Right ventricle myocardium inferior (tissue), 1 donor: ENCODE measurements at regions of chr20 and their contacts with region 1.

Region 1: DNA sequence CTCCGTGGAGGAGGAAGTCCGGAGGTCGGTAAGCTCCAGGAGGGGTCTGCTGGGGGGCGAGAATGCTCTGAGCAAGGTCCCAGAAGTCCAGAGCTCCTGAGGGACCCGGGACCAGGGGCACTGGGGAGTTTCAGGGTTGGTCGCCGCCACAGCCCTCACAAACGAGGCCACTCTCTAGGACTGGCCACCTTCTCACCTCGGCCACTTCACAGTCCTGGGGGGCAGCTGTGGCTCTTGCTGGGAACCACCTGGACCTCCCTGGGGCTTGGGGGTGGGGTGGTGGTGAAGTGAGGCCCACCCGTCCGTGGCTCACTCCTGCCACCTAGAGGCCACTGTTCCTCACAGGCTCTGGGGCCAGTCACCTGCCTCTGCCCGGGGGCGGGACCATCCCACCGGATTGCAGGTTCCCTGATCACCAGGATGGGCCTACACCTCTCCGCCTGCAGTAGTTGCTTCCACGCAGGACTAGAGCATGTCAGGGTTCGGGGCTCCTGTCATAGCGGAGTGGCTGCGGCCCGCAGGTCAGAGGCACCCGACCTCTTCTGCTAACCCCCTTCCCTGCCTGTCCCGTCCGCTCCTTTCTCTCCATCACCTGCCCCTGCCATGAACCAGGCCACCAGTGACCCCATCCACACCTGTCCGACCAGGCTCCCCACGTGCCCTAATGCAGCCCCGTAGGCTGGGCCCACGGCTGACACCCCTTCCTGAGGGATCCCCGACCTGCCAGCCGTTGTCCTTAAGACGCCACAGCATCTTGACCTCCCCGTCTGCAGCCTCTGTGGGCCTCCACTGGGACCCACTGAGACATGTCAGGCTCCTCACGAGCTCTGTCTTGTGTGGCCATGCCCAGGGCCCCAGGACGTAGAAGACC is 5.1 kb upstream of the TCEA2 start:
- DNase-seq: peak; percentile 90
- ATAC-seq: peak; percentile 56

Region 2: DNA sequence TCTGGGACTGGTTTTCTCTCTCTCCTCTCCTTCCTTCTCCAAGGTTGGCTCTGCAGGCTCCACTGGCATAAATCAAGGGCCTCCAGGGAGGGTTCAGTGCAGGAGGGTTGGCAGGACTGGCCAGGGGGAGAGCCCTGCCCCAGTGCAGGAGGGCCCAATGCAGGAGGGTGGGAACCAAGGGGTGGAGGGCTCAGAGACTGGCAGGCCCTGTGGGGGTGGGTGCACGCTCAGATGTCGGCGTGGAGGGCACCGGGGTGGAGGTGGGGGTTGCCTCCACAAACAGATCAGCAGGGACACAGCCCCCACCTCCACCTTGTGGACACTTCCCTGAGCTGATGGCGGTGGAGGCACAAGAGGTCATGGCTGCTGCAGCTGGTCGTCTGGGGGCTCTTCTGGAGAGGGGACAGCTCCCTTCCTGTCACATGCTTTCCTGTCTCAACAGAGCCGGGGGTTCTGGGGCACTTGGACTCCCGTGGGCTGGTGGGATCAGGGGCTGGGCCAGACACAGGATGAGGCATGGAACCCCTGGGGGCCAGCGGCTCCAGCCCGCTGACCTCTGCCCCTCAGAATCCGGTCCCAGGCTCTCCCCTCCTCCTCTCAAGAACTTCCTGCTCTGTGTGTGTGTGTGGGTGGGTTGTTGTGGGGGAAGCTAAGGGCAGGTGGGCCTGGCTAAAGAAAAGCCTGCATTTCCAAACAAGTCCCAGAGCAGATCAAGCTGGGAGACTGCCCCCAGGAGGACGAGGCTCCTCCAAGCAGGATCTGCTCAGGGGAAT is 199.3 kb before region 1 on chr20:
- intact Hi-C with region 1: loop called (anchors 10 kb)
- DNase-seq: no peak
- ATAC-seq: peak; percentile 30

Region 3: GRCh38 chr20:63955827-63956663 is 101.8 kb before region 1 on chr20 and contains the start of gene UCKL1:
- intact Hi-C with region 1: no loop called
- DNase-seq: peak; percentile 97
- ATAC-seq: peak; percentile 87
- total RNA-seq, gene UCKL1: 52.0 TPM

Region 4: DNA sequence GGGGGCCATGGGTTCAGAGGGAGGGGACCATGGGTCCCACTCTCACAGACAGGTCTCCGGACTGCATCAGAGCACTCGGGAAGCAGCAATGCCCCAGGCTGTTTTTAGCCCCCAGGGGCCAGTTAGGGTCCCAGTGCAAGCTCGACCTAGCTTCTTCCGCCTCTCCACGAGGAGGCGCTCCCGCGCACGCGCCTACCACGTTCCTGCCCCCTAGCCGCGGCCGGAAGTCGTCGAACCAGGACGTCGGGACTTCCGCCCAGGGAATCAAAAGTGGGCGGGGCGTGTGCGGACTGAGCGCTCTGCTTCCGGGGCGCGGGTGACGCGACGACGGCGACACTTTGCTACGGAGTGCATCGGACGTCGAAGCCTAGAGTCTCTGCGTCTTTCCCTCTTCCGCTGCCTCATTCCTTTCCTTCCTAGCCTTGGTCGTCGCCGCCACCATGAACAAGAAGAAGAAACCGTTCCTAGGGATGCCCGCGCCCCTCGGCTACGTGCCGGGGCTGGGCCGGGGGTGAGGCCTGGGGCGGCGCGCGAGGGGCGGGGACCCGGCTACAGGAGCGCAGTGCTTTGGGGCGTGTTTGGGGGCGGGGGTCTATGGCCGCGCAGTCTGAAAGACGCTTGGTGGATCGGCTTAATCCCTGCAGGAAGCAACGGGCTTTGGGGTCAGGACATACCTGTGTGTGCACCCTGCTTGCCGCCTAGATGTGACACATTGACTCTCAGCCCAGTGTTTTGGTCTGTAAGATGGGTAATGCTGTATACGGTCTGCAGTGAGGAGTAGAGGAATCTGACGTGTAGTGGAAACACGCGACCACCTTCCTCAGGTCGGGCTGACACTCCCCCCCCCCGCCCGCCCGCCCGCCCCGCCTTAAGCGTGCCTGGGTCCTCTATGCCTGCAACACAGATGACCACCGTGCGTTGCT is 76.8 kb before region 1 on chr20 and contains the start of gene PRPF6:
- intact Hi-C with region 1: loop called (anchors 2 kb)
- DNase-seq: peak; percentile 97
- ATAC-seq: peak; percentile 92
- total RNA-seq, gene PRPF6: 46.4 TPM

Region 5: DNA sequence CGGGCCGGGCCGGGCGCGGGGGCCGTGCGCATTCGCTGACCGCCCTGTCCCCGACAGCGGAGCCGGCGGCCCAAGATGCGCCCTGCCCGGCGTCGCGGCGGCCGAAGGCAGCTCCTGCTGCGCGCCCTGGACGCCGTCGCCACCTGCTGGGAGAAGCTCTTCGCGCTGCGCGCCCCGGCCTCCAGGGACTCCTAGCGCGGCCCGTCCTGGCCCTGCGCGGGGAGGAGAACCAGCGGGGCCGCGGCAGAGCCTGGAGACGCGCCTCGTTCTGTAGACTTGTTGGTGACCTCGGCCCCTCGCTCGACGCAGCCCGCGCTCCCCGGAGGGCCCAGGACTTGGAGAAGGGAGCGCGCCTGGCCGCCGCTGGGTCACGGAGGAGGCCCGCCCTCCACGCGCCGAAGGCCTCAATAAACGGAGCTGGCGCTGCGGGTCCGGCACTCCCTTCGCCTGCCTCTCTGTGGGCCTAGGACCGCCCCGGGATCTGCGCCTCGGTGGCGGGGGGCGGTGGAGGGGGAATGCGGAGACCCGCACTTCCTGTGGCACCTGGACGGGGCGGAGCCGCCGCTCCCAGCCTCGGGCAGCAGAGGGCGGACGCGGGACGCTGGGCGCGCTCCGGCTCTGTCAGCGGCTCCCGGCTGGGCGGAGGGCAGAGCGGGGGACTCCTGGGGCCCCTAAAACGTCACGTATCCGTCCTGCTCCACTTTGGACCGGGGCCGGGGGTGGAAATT is 19.1 kb before region 1 on chr20:
- intact Hi-C with region 1: loop called (anchors 1 kb)
- DNase-seq: peak; percentile 89
- ATAC-seq: peak; percentile 80

Region 6: DNA sequence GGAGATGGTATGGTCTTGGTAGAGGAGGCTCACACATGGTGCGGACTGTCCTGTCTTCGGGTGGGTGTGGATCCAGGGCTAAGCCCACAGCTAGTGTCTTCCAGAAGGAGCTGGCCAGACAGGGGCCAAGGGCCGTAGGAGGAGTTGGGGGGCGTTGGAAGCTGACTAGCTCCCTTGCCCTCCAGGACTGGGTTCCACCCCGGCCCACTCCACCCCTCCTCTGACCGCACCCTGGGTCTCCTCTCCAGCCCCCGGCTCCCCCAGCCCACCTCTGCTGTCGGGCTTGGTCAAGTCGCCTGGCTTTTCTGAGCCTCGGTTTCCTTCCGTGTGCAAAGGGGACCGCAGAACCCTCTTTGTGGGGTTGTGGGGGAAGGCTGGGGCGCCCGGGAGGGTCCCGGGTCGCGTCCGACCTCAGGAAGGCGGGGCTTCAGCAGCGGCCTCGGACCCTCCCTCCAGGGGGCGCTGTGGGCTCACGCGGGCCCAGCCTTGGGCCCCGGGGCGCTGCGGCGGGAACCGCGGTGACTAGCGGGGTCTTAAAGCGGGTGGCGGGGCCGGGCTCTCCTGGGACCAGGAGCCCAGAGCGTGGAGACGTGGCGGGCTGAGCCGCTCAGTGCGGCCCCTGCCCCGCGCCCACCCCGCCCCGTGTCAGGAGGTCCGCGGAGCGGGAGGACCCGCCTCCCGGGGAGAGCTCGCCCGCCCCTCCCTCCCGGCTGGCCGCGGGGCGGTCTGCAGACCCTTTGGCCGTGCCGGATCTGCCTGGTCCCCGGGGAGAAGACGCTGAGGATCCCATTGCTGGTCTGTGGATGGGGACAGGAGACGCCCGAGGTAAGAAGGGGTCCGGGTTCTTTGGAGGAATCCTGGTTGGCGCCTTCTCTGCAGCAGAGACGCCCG is 44.1 kb after region 1 on chr20:
- intact Hi-C with region 1: no loop called
- DNase-seq: peak; percentile 66
- ATAC-seq: peak; percentile 67